Activated CD8-positive, alpha-beta T cell treated with anti-CD3 and anti-CD28 coated beads, Interleukin-2, amount 10 ng/mL, durations not matched to agents 7 days and 5 days (primary cell): ENCODE measurements at regions of chr10 and their contacts with region 1.

Region 1: DNA sequence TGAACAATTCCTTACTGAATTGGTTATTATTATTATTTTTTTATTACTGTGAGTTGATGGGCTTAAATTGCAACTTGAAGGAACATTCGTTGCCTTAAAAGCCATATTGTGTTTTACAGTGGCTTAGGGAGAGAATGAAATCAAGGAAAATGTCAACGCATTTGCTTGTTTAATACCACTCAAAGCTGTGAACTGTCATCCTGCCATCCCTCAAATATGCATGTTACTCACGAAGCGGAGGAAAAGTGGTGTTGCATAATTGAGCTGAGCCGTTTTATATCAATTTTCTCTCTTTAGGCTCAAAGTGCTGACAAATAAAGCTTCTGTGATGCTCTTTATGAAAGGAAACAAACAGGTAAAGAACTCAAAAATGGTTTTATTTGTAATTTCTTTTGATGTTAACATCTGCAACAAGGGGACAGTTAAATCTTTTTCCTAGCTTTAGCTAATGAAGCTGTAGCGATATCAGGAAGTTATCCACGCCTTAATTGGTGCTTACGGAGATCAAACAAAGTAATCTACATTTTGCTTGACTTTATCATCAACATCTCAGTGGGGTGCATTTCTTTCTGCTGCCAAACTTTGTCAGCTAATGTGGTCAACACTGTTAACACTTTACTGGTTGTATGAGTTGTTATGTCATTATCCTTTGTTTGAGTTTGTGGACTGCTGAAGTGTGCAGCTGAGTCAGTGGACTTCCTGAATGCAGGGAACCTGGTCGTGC is 33.1 kb downstream of the GLRX3 start:
- DNase-seq: no peak
- ATAC-seq: no peak
- H3K4me3 Mint-ChIP-seq: no peak overlapping the region
- H3K27ac Mint-ChIP-seq: no peak overlapping the region
- H3K4me1 Mint-ChIP-seq: peaks cover 50% of the 10 kb centered on the region
- H3K27me3 Mint-ChIP-seq: no peaks in the 10 kb centered on the region

Region 2: GRCh38 chr10:130179640-130180039 is 10.3 kb after region 1 on chr10:
- CTCF ChIA-PET with region 1: interaction called, 14 read pairs
- POLR2A ChIA-PET with region 1: no interaction called
- DNase-seq: peak; percentile 65
- ATAC-seq: peak; percentile 53
- H3K4me3 Mint-ChIP-seq: no peak overlapping the region
- H3K27ac Mint-ChIP-seq: no peak overlapping the region
- H3K4me1 Mint-ChIP-seq: peaks cover 23% of the 10 kb centered on the region
- H3K27me3 Mint-ChIP-seq: no peaks in the 10 kb centered on the region

Region 3: DNA sequence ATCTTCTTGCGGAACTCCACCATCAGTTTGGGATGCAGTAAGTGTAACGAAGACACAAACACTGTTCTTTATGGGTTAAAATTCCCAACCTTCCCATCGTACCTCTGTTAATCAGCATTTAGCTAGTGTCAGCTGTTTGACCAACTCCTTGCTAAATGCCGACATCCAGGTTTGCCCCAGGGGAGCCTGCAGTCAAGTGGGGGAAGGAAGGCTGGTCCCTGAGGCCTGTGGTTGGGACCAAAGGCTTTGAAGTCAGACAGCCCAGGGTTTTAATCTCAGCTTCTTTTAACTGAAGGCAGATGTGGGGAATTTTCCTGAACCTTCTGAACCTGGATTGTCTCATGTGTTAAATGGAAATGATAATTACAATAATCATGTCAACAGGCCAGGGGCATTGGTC is 410.6 kb after region 1 on chr10:
- CTCF ChIA-PET with region 1: no interaction called
- POLR2A ChIA-PET with region 1: no interaction called
- DNase-seq: no peak
- ATAC-seq: no peak
- H3K4me3 Mint-ChIP-seq: no peak overlapping the region
- H3K27ac Mint-ChIP-seq: no peak overlapping the region
- H3K4me1 Mint-ChIP-seq: no peaks in the 10 kb centered on the region
- H3K27me3 Mint-ChIP-seq: no peaks in the 10 kb centered on the region